ENCODE measurements at regions of chr17 and their contacts with region 1.

Region 1: GRCh38 chr17:716238-716637 is 1.6 kb upstream of the VPS53 start:
- DNase-seq: no peak
- H3K4me3 ChIP-seq: no peak overlapping the region
- H3K27ac ChIP-seq: no peak overlapping the region
- H3K4me1 ChIP-seq: peaks cover 7% of the 10 kb centered on the region
- H3K27me3 ChIP-seq: no peaks in the 10 kb centered on the region
- CTCF ChIP-seq: no peak

Region 2: DNA sequence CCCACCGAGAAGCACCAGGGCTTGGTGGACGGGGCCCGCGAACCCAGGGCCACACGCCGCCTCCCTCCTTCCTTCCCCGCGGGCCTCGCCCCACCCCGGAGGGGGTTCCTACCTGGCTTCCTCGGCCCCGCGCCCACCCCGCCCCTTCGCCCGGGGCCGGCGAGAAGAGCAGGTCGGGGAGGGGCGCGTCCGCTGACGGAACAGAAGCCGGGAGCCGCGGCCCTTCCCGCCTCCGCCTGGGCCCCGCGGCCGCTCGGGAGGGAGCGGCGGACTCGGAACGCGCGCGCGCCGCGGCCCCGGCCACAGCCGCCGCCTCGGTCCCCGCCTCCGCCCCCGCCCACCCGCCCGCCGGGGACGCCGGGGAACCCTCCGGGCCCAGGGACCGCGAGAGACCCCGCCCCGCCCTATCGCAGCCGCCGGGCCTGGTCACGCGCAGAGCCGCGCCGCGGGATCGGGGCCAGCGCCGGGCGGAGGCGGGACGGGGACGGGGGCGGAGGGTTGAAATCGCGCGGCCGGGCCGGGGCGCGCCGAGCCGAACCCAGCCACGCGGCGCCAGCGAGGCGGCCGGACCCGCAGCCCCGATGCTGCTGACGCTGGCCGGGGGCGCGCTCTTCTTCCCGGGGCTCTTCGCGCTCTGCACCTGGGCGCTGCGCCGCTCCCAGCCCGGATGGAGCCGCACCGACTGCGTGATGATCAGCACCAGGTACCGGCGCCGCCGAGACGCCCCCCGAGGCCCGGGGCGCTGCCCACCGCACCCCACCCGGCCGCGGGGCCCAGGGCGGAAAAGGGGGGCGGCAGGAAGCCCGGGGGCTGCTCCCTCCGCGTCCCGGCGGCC is 16.0 kb after region 1 on chr17 and contains the start of gene TLCD3A:
- CTCF ChIA-PET with region 1: interaction called, 5 read pairs
- dilution Hi-C with region 1: no loop called
- in situ Hi-C with region 1: no loop called
- intact Hi-C with region 1: loop called (anchors 1 kb)
- DNase-seq: peak; percentile 75
- H3K4me3 ChIP-seq: peak within 1 kb of the TSS; percentile 55 to 85 (median 79)
- H3K27ac ChIP-seq: peak within 1 kb of the TSS; percentile 98
- H3K4me1 ChIP-seq: peaks cover 44% of the 10 kb centered on the region
- H3K27me3 ChIP-seq: no peaks in the 10 kb centered on the region
- CTCF ChIP-seq: no peak
- total RNA-seq, gene TLCD3A: 24.2 to 41.1 TPM

Region 3: GRCh38 chr17:752002-752619 is 35.9 kb after region 1 on chr17 and contains the start of gene GEMIN4:
- CTCF ChIA-PET with region 1: no interaction called
- dilution Hi-C with region 1: no loop called
- in situ Hi-C with region 1: no loop called
- intact Hi-C with region 1: loop called (anchors 1 kb)
- DNase-seq: peak; percentile 79
- H3K4me3 ChIP-seq: peak within 1 kb of the TSS; percentile 38 to 84 (median 63)
- H3K27ac ChIP-seq: peak within 1 kb of the TSS; percentile 37
- H3K4me1 ChIP-seq: peaks cover 17% of the 10 kb centered on the region
- H3K27me3 ChIP-seq: no peaks in the 10 kb centered on the region
- CTCF ChIP-seq: peak; percentile 77 to 94
- total RNA-seq, gene GEMIN4: 17.0 to 31.4 TPM

Region 4: GRCh38 chr17:828761-829160 is 112.5 kb after region 1 on chr17:
- CTCF ChIA-PET with region 1: no interaction called
- dilution Hi-C with region 1: no loop called
- in situ Hi-C with region 1: no loop called
- intact Hi-C with region 1: no loop called
- DNase-seq: no peak
- H3K4me3 ChIP-seq: no peak overlapping the region
- H3K27ac ChIP-seq: no peak overlapping the region
- H3K4me1 ChIP-seq: no peaks in the 10 kb centered on the region
- H3K27me3 ChIP-seq: no peaks in the 10 kb centered on the region
- CTCF ChIP-seq: no peak

Region 5: DNA sequence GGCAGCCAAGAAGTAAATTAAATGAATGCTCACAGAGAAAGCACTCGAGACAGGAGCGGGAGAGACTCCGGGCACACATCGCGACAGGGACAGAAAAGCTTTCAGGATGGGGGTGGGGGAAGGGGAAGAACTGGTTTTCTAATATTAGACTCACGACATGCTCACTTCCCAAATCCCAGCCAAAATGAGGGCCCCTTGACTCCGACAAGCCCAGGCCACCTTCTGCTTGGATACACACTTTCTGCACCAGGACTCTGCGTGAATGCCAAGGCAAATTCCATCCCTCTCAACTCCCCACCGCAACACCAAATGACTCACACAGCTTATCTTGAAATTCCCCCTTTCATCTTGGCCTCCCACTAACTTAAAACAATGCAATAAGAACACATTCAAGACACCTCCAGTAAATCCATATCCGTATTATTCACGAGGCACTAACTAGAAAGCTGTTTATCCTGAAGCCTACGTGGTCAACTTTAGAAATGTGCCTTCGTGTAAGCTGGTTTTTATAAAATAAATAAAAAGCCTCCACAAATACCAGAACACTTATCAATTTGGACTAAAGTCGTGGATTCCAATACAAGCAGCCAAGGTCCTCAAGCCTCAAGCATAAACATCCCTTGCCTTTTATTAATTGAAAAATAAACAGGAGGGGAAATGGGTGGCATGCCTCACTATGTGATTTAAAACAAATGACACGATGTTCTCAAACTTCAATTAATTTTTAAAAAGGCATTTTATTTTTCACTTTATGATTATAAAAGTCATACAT is 217.3 kb after region 1 on chr17:
- CTCF ChIA-PET with region 1: no interaction called
- dilution Hi-C with region 1: no loop called
- in situ Hi-C with region 1: no loop called
- intact Hi-C with region 1: loop called (anchors 1 kb)
- DNase-seq: peak; percentile 91
- H3K4me3 ChIP-seq: no peak overlapping the region
- H3K27ac ChIP-seq: peak overlapping the region; percentile 74
- H3K4me1 ChIP-seq: peaks cover 52% of the 10 kb centered on the region
- H3K27me3 ChIP-seq: no peaks in the 10 kb centered on the region
- CTCF ChIP-seq: no peak